PC-9 (cell line): ENCODE measurements at regions of chr17 and their contacts with region 1.

Region 1: GRCh38 chr17:50026901-50027630 is 28.8 kb upstream of the ITGA3 start:
- DNase-seq: peak; percentile 93 to 94
- H3K4me3 ChIP-seq: peak overlapping the region; percentile 58
- H3K27ac ChIP-seq: peak overlapping the region; percentile 96
- H3K4me1 ChIP-seq: peaks cover 54% of the 10 kb centered on the region
- H3K27me3 ChIP-seq: no peaks in the 10 kb centered on the region
- CTCF ChIP-seq: peak; percentile 99

Region 2: GRCh38 chr17:50064258-50065001 is 37.4 kb after region 1 on chr17:
- CTCF ChIA-PET with region 1: interaction called, 7 read pairs
- POLR2A ChIA-PET with region 1: interaction called, 48 read pairs
- intact Hi-C with region 1: loop called (anchors 1 kb)
- DNase-seq: peak; percentile 93 to 98
- H3K4me3 ChIP-seq: peak overlapping the region; percentile 47; the same call in 1 of the 2 replicates
- H3K27ac ChIP-seq: peak overlapping the region; percentile 97
- H3K4me1 ChIP-seq: peaks cover 82% of the 10 kb centered on the region
- H3K27me3 ChIP-seq: no peaks in the 10 kb centered on the region
- CTCF ChIP-seq: no peak

Region 3: DNA sequence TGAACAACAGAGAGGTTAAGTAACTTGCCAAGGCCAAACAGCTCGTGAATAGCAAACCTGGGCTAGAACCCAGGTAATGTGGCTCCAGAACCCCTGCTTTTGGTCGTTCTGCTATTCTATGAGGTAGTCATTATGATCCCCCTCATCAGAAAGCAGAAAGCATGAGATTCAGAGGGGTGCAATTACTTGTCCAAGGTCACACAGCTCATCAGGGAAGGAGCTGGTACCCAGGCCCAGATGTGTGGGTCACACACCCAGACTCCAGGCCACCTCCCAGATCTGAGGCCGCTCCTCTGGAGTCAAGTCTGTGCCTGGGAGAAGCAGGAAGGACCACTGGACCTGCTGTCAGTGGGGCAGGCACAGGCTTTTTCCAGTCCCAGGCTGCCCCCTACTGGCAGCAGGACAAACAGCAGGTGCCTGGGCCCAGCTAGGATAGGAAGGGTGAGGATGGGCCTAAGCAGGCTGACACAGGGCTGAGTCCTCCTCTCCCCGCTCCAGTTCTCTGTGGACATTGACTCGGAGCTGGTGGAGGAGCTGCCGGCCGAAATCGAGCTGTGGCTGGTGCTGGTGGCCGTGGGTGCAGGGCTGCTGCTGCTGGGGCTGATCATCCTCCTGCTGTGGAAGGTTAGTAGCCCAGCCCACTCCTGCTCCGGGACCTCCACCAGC is 60.3 kb after region 1 on chr17:
- CTCF ChIA-PET with region 1: no interaction called
- POLR2A ChIA-PET with region 1: no interaction called
- intact Hi-C with region 1: loop called (anchors 1 kb)
- DNase-seq: peak; percentile 68 to 72
- H3K4me3 ChIP-seq: no peak overlapping the region
- H3K27ac ChIP-seq: no peak overlapping the region
- H3K4me1 ChIP-seq: no peaks in the 10 kb centered on the region
- H3K27me3 ChIP-seq: no peaks in the 10 kb centered on the region
- CTCF ChIP-seq: peak; percentile 97

Region 4: GRCh38 chr17:50151041-50151936 is 124.2 kb after region 1 on chr17:
- CTCF ChIA-PET with region 1: no interaction called
- POLR2A ChIA-PET with region 1: no interaction called
- intact Hi-C with region 1: loop called (anchors 2 kb)
- DNase-seq: peak; percentile 85
- H3K4me3 ChIP-seq: peak overlapping the region; percentile 70
- H3K27ac ChIP-seq: peak overlapping the region; percentile 86
- H3K4me1 ChIP-seq: peaks cover 70% of the 10 kb centered on the region
- H3K27me3 ChIP-seq: no peaks in the 10 kb centered on the region
- CTCF ChIP-seq: peak; percentile 69

Region 5: GRCh38 chr17:50719144-50719923 is 692.3 kb after region 1 on chr17 and contains the start of gene LUC7L3:
- CTCF ChIA-PET with region 1: no interaction called
- POLR2A ChIA-PET with region 1: no interaction called
- intact Hi-C with region 1: no loop called
- DNase-seq: peak; percentile 85 to 94
- H3K4me3 ChIP-seq: peak within 1 kb of the TSS; percentile 92
- H3K27ac ChIP-seq: peak within 1 kb of the TSS; percentile 95
- H3K4me1 ChIP-seq: peaks cover 55% of the 10 kb centered on the region
- H3K27me3 ChIP-seq: no peaks in the 10 kb centered on the region
- CTCF ChIP-seq: 0 out of 2 replicates have a peak, but pooled peaks have one; percentile 13
- total RNA-seq, gene LUC7L3: 147 and 212 TPM in 2 replicates